Activated CD4-positive, alpha-beta memory T cell treated with anti-CD3 and anti-CD28 coated beads for 36 hours (primary cell): ENCODE measurements at regions of chr6 and their contacts with region 1.

Region 1: GRCh38 chr6:71533939-71534379 is 245.3 kb downstream of the OGFRL1 start:
- DNase-seq: no peak
- H3K4me3 Mint-ChIP-seq: no peak overlapping the region
- H3K27ac Mint-ChIP-seq: no peak overlapping the region
- H3K4me1 Mint-ChIP-seq: no peaks in the 10 kb centered on the region
- H3K27me3 Mint-ChIP-seq: no peaks in the 10 kb centered on the region

Region 2: GRCh38 chr6:71419217-71420094 is 114.5 kb before region 1 on chr6:
- CTCF ChIA-PET with region 1: no interaction called
- POLR2A ChIA-PET with region 1: no interaction called
- intact Hi-C with region 1: no loop called
- DNase-seq: no peak
- H3K4me3 Mint-ChIP-seq: peak overlapping the region; percentile 20
- H3K27ac Mint-ChIP-seq: no peak overlapping the region
- H3K4me1 Mint-ChIP-seq: peaks cover 2% of the 10 kb centered on the region
- H3K27me3 Mint-ChIP-seq: peaks cover 39% of the 10 kb centered on the region

Region 3: GRCh38 chr6:71510057-71510713 is 23.8 kb before region 1 on chr6:
- CTCF ChIA-PET with region 1: no interaction called
- POLR2A ChIA-PET with region 1: no interaction called
- intact Hi-C with region 1: no loop called
- DNase-seq: no peak
- H3K4me3 Mint-ChIP-seq: no peak overlapping the region
- H3K27ac Mint-ChIP-seq: no peak overlapping the region
- H3K4me1 Mint-ChIP-seq: no peaks in the 10 kb centered on the region
- H3K27me3 Mint-ChIP-seq: peaks cover 2% of the 10 kb centered on the region

Region 4: GRCh38 chr6:71551798-71552197 is 17.8 kb after region 1 on chr6:
- CTCF ChIA-PET with region 1: no interaction called
- POLR2A ChIA-PET with region 1: no interaction called
- intact Hi-C with region 1: no loop called
- DNase-seq: no peak
- H3K4me3 Mint-ChIP-seq: no peak overlapping the region
- H3K27ac Mint-ChIP-seq: no peak overlapping the region
- H3K4me1 Mint-ChIP-seq: no peaks in the 10 kb centered on the region
- H3K27me3 Mint-ChIP-seq: peaks cover 3% of the 10 kb centered on the region

Region 5: GRCh38 chr6:71902261-71902660 is 368.3 kb after region 1 on chr6:
- CTCF ChIA-PET with region 1: no interaction called
- POLR2A ChIA-PET with region 1: no interaction called
- intact Hi-C with region 1: no loop called
- DNase-seq: no peak
- H3K4me3 Mint-ChIP-seq: no peak overlapping the region
- H3K27ac Mint-ChIP-seq: no peak overlapping the region
- H3K4me1 Mint-ChIP-seq: no peaks in the 10 kb centered on the region
- H3K27me3 Mint-ChIP-seq: no peaks in the 10 kb centered on the region

Region 6: DNA sequence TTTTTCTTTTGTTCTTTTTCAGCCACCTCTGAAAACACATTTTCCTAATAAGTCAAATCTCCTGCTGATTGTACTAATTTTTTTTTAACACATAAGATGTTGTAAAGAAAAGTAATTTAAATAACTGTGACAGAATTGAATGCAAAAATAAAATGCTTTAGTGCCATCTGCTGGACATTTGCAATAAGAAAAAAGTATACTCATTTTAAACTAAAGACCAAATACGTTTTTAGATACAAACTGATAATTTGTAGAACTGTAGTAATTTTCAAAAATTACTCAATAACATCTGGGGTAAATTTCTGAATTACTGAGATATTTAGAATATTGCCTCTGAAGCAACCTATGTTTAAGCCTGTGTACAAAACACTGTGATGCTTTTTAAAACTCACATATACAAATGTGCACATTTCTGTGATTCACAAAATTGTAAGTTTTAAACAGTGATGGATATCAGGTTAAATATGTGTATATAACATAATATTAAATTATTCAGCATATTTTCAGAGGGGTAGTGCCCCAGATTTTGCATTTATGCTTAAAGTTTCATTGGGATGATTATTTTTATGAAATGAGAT is 551.1 kb after region 1 on chr6:
- CTCF ChIA-PET with region 1: interaction called, 3 read pairs
- POLR2A ChIA-PET with region 1: no interaction called
- intact Hi-C with region 1: loop called (anchors 2 kb)
- DNase-seq: no peak
- H3K4me3 Mint-ChIP-seq: no peak overlapping the region
- H3K27ac Mint-ChIP-seq: no peak overlapping the region
- H3K4me1 Mint-ChIP-seq: no peaks in the 10 kb centered on the region
- H3K27me3 Mint-ChIP-seq: no peaks in the 10 kb centered on the region